Breast epithelium (tissue), 4 donors: ENCODE measurements at regions of chr3 and their contacts with region 1.

Region 1: DNA sequence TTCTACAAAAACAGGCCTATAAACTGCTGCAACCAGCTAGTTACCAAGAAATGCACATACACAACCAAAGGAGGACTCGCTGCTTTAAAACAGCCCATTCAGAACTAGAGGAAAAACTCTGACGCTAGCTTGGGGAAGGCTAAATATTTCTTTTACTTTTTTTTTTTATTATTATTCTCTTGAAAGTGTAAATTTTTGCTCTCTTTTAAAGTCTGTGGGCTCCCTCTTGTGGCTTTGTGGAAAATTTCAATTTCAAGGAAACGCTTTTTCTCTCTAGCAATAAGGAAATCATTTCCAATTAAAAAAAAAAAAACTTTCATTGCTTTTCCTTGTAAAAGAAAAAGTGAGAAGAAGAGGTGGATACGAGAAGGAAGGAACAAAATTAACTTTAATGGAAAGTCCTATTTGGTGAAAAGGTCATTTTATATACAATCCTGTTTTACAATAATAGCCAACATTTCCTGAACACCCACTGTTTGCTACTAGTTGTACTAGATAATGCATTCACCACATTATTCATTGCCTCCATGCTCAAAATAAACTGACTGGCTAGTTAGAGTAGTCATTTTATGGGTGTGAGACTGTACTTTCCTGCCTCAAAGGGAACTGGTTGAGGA is 51.2 kb upstream of the SAMMSON start:
- DNase-seq: no peak
- H3K4me3 ChIP-seq: no peak overlapping the region
- H3K27ac ChIP-seq: no peak overlapping the region
- H3K4me1 ChIP-seq: no peaks in the 10 kb centered on the region
- H3K27me3 ChIP-seq: no peaks in the 10 kb centered on the region
- CTCF ChIP-seq: peak in 1 of 3 donors; percentile 52
- POLR2A ChIP-seq: no peak

Region 2: GRCh38 chr3:68912376-68912775 is 1036.0 kb before region 1 on chr3:
- intact Hi-C with region 1: loop called (anchors 5 kb)
- DNase-seq: no peak
- H3K4me3 ChIP-seq: no peak overlapping the region
- H3K27ac ChIP-seq: no peak overlapping the region
- H3K4me1 ChIP-seq: no peaks in the 10 kb centered on the region
- H3K27me3 ChIP-seq: peaks cover 0 to 43% of the 10 kb centered on the region in 2 donors
- CTCF ChIP-seq: no peak
- POLR2A ChIP-seq: no peak

Region 3: DNA sequence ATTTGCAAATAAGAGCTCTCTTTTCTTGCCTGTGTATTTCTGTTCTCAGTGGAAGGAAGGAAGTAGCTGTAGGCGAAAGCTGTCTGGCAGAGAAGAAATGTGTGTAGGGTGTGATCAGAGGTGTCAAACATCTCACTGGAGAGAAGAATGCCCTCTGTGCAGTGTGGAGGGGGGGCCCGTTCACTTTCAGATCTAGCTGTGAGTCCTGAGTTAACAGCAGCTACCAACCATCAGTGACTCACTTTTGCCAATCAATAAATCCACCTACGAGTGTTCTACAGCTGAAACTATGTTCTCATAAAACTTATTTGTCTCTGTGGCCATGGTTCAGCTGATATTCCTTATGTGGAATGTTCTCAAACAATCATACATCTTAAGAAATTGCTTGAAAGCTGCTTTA is 666.2 kb before region 1 on chr3:
- intact Hi-C with region 1: no loop called
- DNase-seq: no peak
- H3K4me3 ChIP-seq: no peak overlapping the region
- H3K27ac ChIP-seq: no peak overlapping the region
- H3K4me1 ChIP-seq: no peaks in the 10 kb centered on the region
- H3K27me3 ChIP-seq: no peaks in the 10 kb centered on the region
- CTCF ChIP-seq: no peak
- POLR2A ChIP-seq: no peak

Region 4: GRCh38 chr3:69936266-69936665 is 12.1 kb before region 1 on chr3:
- intact Hi-C with region 1: loop called (anchors 2 kb)
- DNase-seq: no peak
- H3K4me3 ChIP-seq: no peak overlapping the region
- H3K27ac ChIP-seq: no peak overlapping the region
- H3K4me1 ChIP-seq: no peaks in the 10 kb centered on the region
- H3K27me3 ChIP-seq: no peaks in the 10 kb centered on the region
- CTCF ChIP-seq: no peak
- POLR2A ChIP-seq: no peak